ENCODE measurements at regions of chr13 and their contacts with region 1.

Region 1: DNA sequence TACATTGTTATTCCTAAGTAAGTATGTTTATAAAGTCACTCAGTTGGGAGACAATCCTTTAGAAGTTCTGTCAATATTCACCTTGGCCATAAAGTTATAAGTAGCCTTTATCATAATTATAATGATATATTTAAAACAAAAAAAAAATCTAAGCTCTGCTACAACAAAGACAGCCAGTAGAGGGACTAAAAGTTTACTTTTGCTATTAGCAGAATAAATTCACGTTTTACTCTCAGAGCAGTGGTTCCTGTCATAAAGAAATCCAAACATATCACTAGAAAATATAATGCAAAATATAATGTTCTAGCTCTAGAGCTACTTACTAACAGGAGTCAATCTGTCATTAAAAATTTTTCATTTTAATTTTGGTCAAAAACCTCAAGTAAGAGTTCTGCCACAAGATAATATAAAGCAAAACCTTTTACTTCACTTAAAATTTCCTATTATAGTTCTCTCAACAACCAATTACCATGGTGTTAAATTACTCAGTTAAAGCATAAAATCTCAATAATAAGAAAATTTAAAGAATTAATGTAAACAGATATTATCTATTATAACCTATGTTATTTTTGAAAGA is 17.7 kb downstream of the INTS6 start:
- DNase-seq: peak; percentile 49
- ATAC-seq: peak; percentile 54; the same call in 1 of the 2 replicates
- H3K4me3 ChIP-seq: no peak overlapping the region
- H3K27ac ChIP-seq: no peak overlapping the region
- H3K4me1 ChIP-seq: no peaks in the 10 kb centered on the region
- H3K27me3 ChIP-seq: no peaks in the 10 kb centered on the region
- CTCF ChIP-seq: peak; percentile 73
- POLR2A ChIP-seq: no peak
- RAD21 ChIP-seq: peak; percentile 81

Region 2: DNA sequence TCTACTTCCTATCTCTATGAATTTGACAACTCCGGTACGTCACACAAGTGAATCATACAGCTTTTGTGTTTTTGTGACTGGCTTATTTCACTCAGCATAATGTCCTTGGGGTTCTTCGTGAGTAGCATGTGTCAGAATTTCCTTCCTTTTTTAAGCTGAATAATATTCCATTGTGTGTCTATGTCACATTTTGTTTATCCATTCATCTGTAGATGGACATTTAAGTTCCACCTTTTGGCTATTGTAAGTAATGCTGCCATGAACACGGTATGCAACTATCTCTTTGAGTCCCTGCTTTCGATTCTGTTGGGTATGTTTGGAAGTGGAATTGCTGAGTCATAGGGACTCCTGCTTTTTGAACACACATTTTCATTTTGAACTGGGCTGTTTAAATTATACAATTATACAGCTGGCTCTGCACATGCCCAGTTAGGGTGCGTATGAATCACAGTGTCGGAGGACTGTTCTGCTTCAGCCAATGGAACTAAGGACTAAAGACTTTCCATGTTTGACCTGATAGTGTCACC is 281.0 kb before region 1 on chr13:
- CTCF ChIA-PET with region 1: no interaction called
- POLR2A ChIA-PET with region 1: no interaction called
- dilution Hi-C with region 1: no loop called
- in situ Hi-C with region 1: no loop called
- intact Hi-C with region 1: loop called (anchors 5 kb)
- DNase-seq: peak; percentile 30
- ATAC-seq: peak; percentile 68
- H3K4me3 ChIP-seq: no peak overlapping the region
- H3K27ac ChIP-seq: no peak overlapping the region
- H3K4me1 ChIP-seq: no peaks in the 10 kb centered on the region
- H3K27me3 ChIP-seq: peaks cover 17% of the 10 kb centered on the region
- CTCF ChIP-seq: no peak
- POLR2A ChIP-seq: no peak
- RAD21 ChIP-seq: no peak

Region 3: DNA sequence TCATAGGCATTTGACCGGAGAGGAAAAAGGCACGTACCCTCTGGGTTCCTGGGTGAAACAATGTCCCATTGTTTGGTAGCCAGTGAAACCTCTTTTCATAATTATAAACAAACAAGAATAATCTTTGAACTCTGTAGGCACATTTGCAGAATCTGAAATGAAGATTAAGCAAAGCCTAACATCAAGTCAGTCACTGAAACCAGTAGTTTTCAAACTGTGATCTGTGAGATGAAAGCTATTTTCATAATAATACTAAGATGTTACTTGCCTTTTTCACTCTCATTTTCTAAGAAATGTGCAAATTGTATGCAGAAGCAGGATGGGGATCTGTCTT is 254.5 kb after region 1 on chr13:
- CTCF ChIA-PET with region 1: no interaction called
- POLR2A ChIA-PET with region 1: no interaction called
- dilution Hi-C with region 1: no loop called
- in situ Hi-C with region 1: no loop called
- intact Hi-C with region 1: no loop called
- DNase-seq: no peak
- ATAC-seq: no peak
- H3K4me3 ChIP-seq: no peak overlapping the region
- H3K27ac ChIP-seq: no peak overlapping the region
- H3K4me1 ChIP-seq: no peaks in the 10 kb centered on the region
- H3K27me3 ChIP-seq: no peaks in the 10 kb centered on the region
- CTCF ChIP-seq: no peak
- POLR2A ChIP-seq: no peak
- RAD21 ChIP-seq: no peak

Region 4: GRCh38 chr13:51797664-51798488 is 362.8 kb after region 1 on chr13:
- CTCF ChIA-PET with region 1: no interaction called
- POLR2A ChIA-PET with region 1: no interaction called
- dilution Hi-C with region 1: no loop called
- in situ Hi-C with region 1: loop called (anchors 5 kb)
- intact Hi-C with region 1: loop called (anchors 2 kb)
- DNase-seq: peak; percentile 69
- ATAC-seq: peak; percentile 18; the same call in 1 of the 2 replicates
- H3K4me3 ChIP-seq: no peak overlapping the region
- H3K27ac ChIP-seq: no peak overlapping the region
- H3K4me1 ChIP-seq: peaks cover 9% of the 10 kb centered on the region
- H3K27me3 ChIP-seq: no peaks in the 10 kb centered on the region
- CTCF ChIP-seq: peak; percentile 66
- POLR2A ChIP-seq: no peak
- RAD21 ChIP-seq: peak; percentile 79